ENCODE measurements at regions of chr2 and their contacts with region 1.

Region 1: DNA sequence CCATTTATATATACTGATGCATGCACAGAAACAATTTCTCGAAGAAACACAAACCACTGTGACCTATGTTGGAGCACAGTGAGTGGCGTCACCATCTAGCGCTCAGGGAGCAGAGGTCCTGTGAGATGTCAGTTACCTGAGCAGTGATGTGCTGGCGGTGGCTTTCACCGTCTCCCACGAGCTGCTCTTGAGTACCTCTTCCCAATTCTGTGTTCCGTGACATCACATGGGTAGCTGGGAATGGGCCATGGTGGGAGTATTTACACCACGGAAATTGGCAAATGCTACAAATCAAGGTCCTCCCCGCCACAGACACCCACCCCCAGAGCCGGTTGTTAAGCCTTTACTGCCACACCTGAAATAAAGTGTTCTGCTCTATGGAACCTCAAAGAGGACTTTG is 24.4 kb downstream of the GBX2 start:
- DNase-seq: no peak
- ATAC-seq: no peak
- H3K4me3 Mint-ChIP-seq: no peak overlapping the region
- H3K27ac Mint-ChIP-seq: no peak overlapping the region
- H3K4me1 Mint-ChIP-seq: peaks cover 13% of the 10 kb centered on the region
- H3K27me3 Mint-ChIP-seq: peaks cover 6% of the 10 kb centered on the region
- CTCF ChIP-seq: no peak

Region 2: GRCh38 chr2:236162882-236163470 is 19.2 kb after region 1 on chr2:
- CTCF ChIA-PET with region 1: interaction called, 20 read pairs
- POLR2A ChIA-PET with region 1: no interaction called
- DNase-seq: peak; percentile 44
- ATAC-seq: no peak
- H3K4me3 Mint-ChIP-seq: peak overlapping the region; percentile 37; the same call in 1 of the 2 replicates
- H3K27ac Mint-ChIP-seq: no peak overlapping the region
- H3K4me1 Mint-ChIP-seq: peaks cover 60% of the 10 kb centered on the region
- H3K27me3 Mint-ChIP-seq: peaks cover 90% of the 10 kb centered on the region
- CTCF ChIP-seq: no peak